ENCODE measurements at regions of chr17 and their contacts with region 1.

Region 1: DNA sequence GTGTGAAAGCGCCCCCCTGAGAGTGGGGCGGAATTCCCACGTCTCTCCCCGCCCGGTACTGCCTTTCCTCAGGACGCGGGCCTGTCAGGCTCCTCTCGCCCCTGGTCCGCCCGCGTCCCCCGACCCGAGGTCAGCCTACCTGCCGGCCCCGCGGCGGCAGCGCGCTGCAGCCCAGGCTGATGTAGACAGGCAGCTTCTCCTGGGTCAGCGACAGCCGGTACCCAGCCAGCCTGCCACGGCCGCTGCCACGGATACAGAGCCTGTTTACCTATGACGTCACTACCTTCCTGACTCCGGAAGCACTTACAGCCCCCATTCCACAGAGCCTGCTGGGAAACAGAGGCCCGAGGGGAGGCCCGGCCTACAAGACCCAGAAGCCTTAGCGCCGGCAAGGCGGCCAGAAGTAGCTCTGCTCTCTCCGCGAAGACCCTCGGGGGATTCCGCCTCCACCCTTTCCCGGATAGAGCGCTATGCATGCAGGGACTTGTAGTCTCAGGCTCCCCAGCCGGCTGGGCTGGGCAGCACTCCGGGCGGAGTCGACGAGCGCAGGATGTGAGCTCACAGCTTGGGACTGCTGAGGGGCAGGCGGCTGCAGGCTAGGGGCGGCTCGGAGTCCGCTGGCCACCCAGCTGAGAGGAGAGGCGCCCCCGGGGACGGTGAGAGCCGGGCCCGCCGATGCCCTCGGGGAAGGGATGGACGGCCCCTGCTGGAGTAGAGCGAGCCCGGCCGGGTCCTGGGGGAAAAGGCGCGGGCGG is at the starts of genes IFT20 and TNFAIP1:
- DNase-seq: peak; percentile 92 to 100 (median 96)
- ATAC-seq: peak; percentile 95
- H3K4me3 ChIP-seq: peak within 1 kb of the TSS; percentile 92
- H3K4me3 Mint-ChIP-seq: peak within 1 kb of the TSS; percentile 98
- H3K27ac ChIP-seq: peak within 1 kb of the TSS; percentile 87 to 91
- H3K27ac Mint-ChIP-seq: peak within 1 kb of the TSS; percentile 88
- H3K4me1 ChIP-seq: peaks cover 38% of the 10 kb centered on the region
- H3K4me1 Mint-ChIP-seq: peaks cover 56% of the 10 kb centered on the region
- H3K27me3 ChIP-seq: no peaks in the 10 kb centered on the region
- H3K27me3 Mint-ChIP-seq: no peaks in the 10 kb centered on the region
- CTCF ChIP-seq: no peak
- total RNA-seq, gene IFT20: 52.6 to 53.1 TPM
- total RNA-seq, gene TNFAIP1: 9.5 to 12.1 TPM

Region 2: GRCh38 chr17:28041068-28041843 is 294.1 kb before region 1 on chr17:
- CTCF ChIA-PET with region 1: no interaction called
- POLR2A ChIA-PET with region 1: interaction called, 4 read pairs
- intact Hi-C with region 1: loop called in 1 of 2 experiments (anchors 5 kb)
- DNase-seq: peak; percentile 97 to 100 (median 99)
- ATAC-seq: peak; percentile 92
- H3K4me3 ChIP-seq: peak overlapping the region; percentile 84
- H3K4me3 Mint-ChIP-seq: peak overlapping the region; percentile 93
- H3K27ac ChIP-seq: peak overlapping the region; percentile 52 to 69
- H3K27ac Mint-ChIP-seq: peak overlapping the region; percentile 82
- H3K4me1 ChIP-seq: peaks cover 30% of the 10 kb centered on the region
- H3K4me1 Mint-ChIP-seq: peaks cover 57% of the 10 kb centered on the region
- H3K27me3 ChIP-seq: no peaks in the 10 kb centered on the region
- H3K27me3 Mint-ChIP-seq: no peaks in the 10 kb centered on the region
- CTCF ChIP-seq: no peak

Region 3: DNA sequence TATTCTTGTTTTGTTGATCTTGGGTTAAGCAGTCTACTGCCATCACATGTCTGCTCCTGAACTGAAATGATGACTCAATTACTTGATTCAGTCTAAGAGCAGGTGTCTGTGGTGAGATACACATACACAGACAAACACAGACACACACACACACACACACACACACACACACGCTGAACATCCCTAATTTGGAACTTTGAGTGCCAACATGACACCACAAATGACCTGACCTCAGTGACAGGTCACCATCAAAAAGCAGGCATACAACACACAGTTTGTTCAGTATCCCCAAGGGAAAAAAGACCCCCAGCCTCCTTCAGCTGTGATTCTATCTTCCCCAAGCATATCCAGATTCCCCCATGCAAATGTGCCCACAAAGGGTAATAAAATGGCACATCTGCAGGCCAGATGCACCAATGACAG is 146.5 kb before region 1 on chr17:
- CTCF ChIA-PET with region 1: no interaction called
- POLR2A ChIA-PET with region 1: no interaction called
- intact Hi-C with region 1: no loop called
- DNase-seq: no peak
- ATAC-seq: no peak
- H3K4me3 ChIP-seq: no peak overlapping the region
- H3K4me3 Mint-ChIP-seq: no peak overlapping the region
- H3K27ac ChIP-seq: no peak overlapping the region
- H3K27ac Mint-ChIP-seq: no peak overlapping the region
- H3K4me1 ChIP-seq: peaks cover 4% of the 10 kb centered on the region
- H3K4me1 Mint-ChIP-seq: no peaks in the 10 kb centered on the region
- H3K27me3 ChIP-seq: no peaks in the 10 kb centered on the region
- H3K27me3 Mint-ChIP-seq: no peaks in the 10 kb centered on the region
- CTCF ChIP-seq: no peak

Region 4: DNA sequence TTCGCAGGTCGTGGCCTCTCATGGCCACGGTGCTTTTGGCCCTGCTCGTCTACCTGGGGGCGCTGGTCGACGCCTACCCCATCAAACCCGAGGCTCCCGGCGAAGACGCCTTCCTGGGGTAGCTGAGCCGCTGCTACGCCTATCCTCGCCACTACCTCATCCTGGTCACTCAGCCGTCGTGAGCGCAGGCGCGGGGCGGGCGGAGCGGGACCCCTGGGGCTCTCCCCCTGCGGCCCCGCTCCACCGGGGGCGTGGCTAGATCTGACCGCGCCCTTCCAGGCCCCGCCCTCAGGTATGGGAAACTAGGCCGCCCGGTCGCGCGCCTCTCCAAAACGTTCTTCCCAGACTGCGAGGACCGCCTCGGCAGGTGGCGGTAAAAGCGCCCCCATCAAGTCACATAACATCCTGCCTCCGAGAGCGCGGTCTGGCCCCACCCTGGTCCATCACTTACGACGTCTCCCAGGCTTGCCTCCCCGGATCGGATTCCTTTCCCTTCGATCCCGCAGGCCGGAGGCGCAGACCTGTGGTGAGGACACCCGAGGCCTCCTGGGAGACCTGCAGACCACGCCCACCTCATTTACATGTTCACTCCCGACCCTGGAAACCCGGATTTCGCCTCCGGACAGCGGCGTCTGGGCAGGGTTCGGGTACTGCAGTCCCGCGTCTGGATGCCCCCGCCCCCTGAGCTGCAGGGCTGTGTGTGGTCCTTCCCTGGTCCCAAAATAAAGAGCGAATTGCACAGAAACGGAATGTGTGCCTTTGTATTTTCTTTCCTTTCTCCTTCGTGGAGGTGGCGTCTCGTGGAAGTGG is 107.9 kb before region 1 on chr17:
- CTCF ChIA-PET with region 1: no interaction called
- POLR2A ChIA-PET with region 1: no interaction called
- intact Hi-C with region 1: no loop called
- DNase-seq: peak in 4 of 14 experiments; percentile 7 to 35 (median 18)
- ATAC-seq: no peak
- H3K4me3 ChIP-seq: peak overlapping the region; percentile 45
- H3K4me3 Mint-ChIP-seq: peak overlapping the region; percentile 73
- H3K27ac ChIP-seq: no peak overlapping the region
- H3K27ac Mint-ChIP-seq: no peak overlapping the region
- H3K4me1 ChIP-seq: peaks cover 15% of the 10 kb centered on the region
- H3K4me1 Mint-ChIP-seq: peaks cover 11% of the 10 kb centered on the region
- H3K27me3 ChIP-seq: peaks cover 42 to 46% of the 10 kb centered on the region in 2 experiments
- H3K27me3 Mint-ChIP-seq: peaks cover 55% of the 10 kb centered on the region
- CTCF ChIP-seq: no peak

Region 5: DNA sequence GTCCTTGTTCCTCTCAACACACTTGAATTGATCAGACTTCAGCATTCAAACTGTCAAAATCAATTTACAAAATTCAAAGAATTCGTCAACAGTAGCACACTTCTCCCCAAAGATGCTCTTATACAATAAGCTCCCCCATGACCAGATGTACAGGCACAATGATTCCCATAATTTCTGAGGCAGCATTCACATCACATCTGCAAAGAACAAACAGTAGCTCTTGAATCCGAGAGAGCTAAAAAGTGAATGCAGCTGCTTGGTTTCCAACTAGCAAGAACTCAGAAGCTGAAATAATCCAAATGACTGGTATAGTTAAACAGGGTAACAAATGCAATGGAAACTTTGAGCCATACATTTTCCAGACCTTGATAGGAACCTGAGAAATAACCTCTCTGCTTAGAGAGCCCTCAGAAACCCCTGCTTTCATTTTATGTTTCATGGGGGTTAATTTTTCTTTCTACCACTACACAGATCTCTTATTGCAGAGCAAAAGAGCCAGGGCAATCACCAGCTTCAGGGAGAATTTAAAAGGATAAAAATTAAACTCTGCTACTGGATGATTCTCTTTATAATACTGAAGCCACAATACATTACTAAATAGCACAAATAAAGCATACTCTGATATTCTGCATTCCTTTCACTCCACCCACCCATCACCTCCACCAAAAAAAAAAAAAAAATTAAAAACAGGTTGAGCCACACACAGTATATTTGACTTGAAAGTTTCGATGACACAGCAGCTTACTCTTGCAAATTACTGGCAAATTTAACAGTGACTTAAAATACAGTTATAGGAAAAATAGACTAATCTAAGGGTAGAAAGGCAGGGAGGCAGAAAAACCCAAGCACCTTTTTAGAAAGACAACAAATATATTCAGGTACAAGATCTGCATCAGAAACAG is 39.5 kb before region 1 on chr17:
- CTCF ChIA-PET with region 1: no interaction called
- POLR2A ChIA-PET with region 1: no interaction called
- intact Hi-C with region 1: no loop called
- DNase-seq: no peak
- ATAC-seq: no peak
- H3K4me3 ChIP-seq: no peak overlapping the region
- H3K4me3 Mint-ChIP-seq: no peak overlapping the region
- H3K27ac ChIP-seq: no peak overlapping the region
- H3K27ac Mint-ChIP-seq: no peak overlapping the region
- H3K4me1 ChIP-seq: no peaks in the 10 kb centered on the region
- H3K4me1 Mint-ChIP-seq: no peaks in the 10 kb centered on the region
- H3K27me3 ChIP-seq: no peaks in the 10 kb centered on the region
- H3K27me3 Mint-ChIP-seq: peaks cover 33% of the 10 kb centered on the region
- CTCF ChIP-seq: no peak

Region 6: GRCh38 chr17:28357061-28357900 is 21.9 kb after region 1 on chr17 and contains the start of gene POLDIP2:
- CTCF ChIA-PET with region 1: interaction called, 10 read pairs
- POLR2A ChIA-PET with region 1: interaction called, 118 read pairs
- intact Hi-C with region 1: loop called (anchors 1 kb)
- DNase-seq: peak; percentile 91 to 97 (median 95)
- ATAC-seq: peak; percentile 98
- H3K4me3 ChIP-seq: peak within 1 kb of the TSS; percentile 75
- H3K4me3 Mint-ChIP-seq: peak within 1 kb of the TSS; percentile 97
- H3K27ac ChIP-seq: peak within 1 kb of the TSS; percentile 80 to 83
- H3K27ac Mint-ChIP-seq: peak within 1 kb of the TSS; percentile 92
- H3K4me1 ChIP-seq: peaks cover 25% of the 10 kb centered on the region
- H3K4me1 Mint-ChIP-seq: peaks cover 35% of the 10 kb centered on the region
- H3K27me3 ChIP-seq: no peaks in the 10 kb centered on the region
- H3K27me3 Mint-ChIP-seq: no peaks in the 10 kb centered on the region
- CTCF ChIP-seq: no peak
- total RNA-seq, gene POLDIP2: 22.1 to 23.9 TPM

Region 7: DNA sequence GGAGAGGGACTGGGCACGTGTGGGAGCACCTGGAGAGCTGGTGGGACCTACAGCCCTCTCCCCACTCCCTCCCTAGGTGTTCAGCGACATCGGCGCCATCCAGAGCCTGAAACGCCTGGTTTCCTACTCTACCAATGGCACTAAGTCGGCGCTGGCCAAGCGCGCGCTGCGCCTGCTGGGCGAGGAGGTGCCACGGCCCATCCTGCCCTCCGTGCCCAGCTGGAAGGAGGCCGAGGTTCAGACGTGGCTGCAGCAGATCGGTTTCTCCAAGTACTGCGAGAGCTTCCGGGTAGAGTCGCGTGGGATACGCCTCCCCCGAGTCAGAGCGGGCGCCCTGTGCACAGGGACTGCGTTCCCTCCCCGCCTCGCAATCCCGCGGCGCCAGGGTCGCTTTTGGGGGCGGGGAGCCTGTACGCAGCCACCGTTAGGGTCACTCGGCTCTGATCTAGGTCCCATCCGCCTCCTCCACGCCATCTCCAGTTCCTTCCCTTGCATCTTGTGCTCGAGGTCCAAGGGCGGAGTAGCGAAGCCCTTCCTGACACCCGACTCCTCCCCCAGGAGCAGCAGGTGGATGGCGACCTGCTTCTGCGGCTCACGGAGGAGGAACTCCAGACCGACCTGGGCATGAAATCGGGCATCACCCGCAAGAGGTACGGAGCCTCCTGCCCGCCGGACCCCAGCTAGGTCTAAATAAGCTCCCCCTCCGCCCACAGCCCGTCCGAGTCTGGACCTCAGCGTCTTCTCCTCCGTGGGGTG is 49.1 kb after region 1 on chr17:
- CTCF ChIA-PET with region 1: interaction called, 4 read pairs
- POLR2A ChIA-PET with region 1: interaction called, 14 read pairs
- intact Hi-C with region 1: no loop called
- DNase-seq: peak in 13 of 14 experiments; percentile 44 to 78 (median 58)
- ATAC-seq: peak; percentile 93
- H3K4me3 ChIP-seq: peak overlapping the region; percentile 94
- H3K4me3 Mint-ChIP-seq: peak overlapping the region; percentile 94
- H3K27ac ChIP-seq: peak overlapping the region in 1 of 2 donors; percentile 17
- H3K27ac Mint-ChIP-seq: peak overlapping the region; percentile 64
- H3K4me1 ChIP-seq: peaks cover 29% of the 10 kb centered on the region
- H3K4me1 Mint-ChIP-seq: peaks cover 36% of the 10 kb centered on the region
- H3K27me3 ChIP-seq: no peaks in the 10 kb centered on the region
- H3K27me3 Mint-ChIP-seq: peaks cover 8% of the 10 kb centered on the region
- CTCF ChIP-seq: no peak

Region 8: GRCh38 chr17:28842282-28843012 is 507.1 kb after region 1 on chr17 and contains the start of gene FAM222B:
- CTCF ChIA-PET with region 1: no interaction called
- POLR2A ChIA-PET with region 1: no interaction called
- intact Hi-C with region 1: loop called in 1 of 2 experiments (anchors 10 kb)
- DNase-seq: peak; percentile 70 to 94 (median 83)
- ATAC-seq: peak; percentile 97
- H3K4me3 ChIP-seq: peak within 1 kb of the TSS; percentile 99
- H3K4me3 Mint-ChIP-seq: peak within 1 kb of the TSS; percentile 100
- H3K27ac ChIP-seq: peak within 1 kb of the TSS; percentile 78 to 80
- H3K27ac Mint-ChIP-seq: peak within 1 kb of the TSS; percentile 91
- H3K4me1 ChIP-seq: peaks cover 20% of the 10 kb centered on the region
- H3K4me1 Mint-ChIP-seq: peaks cover 27% of the 10 kb centered on the region
- H3K27me3 ChIP-seq: no peaks in the 10 kb centered on the region
- H3K27me3 Mint-ChIP-seq: no peaks in the 10 kb centered on the region
- CTCF ChIP-seq: no peak
- total RNA-seq, gene FAM222B: 17.3 to 17.5 TPM